ENCODE measurements at regions of chr2 and their contacts with region 1.

Region 1: DNA sequence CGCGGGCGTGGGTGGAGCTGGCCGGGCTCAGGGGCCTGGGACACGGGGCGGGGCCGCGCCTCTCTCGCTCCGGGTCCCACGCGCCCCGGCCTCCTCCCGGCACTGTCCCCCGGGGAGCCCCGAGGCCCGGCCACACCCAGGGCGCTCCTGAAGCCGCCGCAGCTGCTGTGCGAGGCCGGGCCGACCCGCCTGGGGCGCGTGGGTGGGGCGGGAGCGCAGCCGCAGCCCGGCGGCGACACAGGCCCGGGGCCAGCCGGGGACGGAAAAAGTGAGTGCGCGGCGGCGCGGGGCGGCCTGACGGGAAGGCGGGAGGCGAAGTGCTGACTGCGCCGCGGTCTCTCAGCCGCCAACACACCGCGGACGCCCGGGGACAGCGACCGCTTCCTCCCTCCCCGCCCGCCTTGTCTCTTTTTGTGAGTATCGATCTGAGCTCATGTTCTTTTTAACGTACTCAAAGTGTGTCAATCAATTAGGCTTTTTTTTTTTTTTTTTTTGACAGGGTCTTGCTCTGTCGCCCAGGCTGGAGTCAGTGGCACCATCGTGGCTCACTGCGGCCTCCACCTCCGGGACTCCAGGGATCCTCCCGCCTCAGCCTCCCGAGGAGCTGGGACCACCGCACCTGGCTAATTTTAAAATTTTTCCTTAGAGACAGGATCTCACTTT is 14.5 kb downstream of the PDCD1 start:
- DNase-seq: peak; percentile 79
- ATAC-seq: peak; percentile 90
- H3K4me3 ChIP-seq: peak overlapping the region; percentile 19 to 52 (median 39)
- H3K4me3 Mint-ChIP-seq: peak overlapping the region; percentile 84
- H3K27ac ChIP-seq: peak overlapping the region in 1 of 2 donors; percentile 30
- H3K27ac Mint-ChIP-seq: peak overlapping the region; percentile 73
- H3K4me1 ChIP-seq: peaks cover 18 to 26% of the 10 kb centered on the region in 2 donors
- H3K4me1 Mint-ChIP-seq: peaks cover 31% of the 10 kb centered on the region
- H3K27me3 ChIP-seq: no peaks in the 10 kb centered on the region
- H3K27me3 Mint-ChIP-seq: no peaks in the 10 kb centered on the region
- CTCF ChIP-seq: peak; percentile 32

Region 2: DNA sequence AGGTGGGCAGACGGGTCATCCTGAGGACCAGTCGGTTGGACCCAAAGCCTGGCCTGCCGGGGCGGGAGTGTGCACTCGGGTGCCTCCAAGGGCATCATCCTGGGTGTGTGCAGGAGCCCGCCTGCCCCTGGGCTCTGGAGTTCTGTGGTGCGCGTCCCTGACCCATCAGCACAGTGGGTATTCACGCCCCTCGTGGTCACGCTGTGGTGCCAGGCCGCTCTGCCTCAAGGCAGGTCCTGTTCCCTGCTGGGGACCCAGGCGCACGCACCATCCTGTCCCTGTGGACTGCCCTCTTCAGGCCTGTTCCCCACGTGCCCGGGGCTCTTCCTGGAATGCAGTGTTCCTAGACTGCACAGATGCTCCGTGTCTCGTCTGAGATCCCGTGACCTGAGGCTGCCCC is 124.1 kb before region 1 on chr2:
- CTCF ChIA-PET with region 1: no interaction called
- POLR2A ChIA-PET with region 1: interaction called, 10 read pairs
- intact Hi-C with region 1: no loop called
- DNase-seq: no peak
- ATAC-seq: no peak
- H3K4me3 ChIP-seq: no peak overlapping the region
- H3K4me3 Mint-ChIP-seq: no peak overlapping the region
- H3K27ac ChIP-seq: no peak overlapping the region
- H3K27ac Mint-ChIP-seq: no peak overlapping the region
- H3K4me1 ChIP-seq: no peaks in the 10 kb centered on the region
- H3K4me1 Mint-ChIP-seq: no peaks in the 10 kb centered on the region
- H3K27me3 ChIP-seq: no peaks in the 10 kb centered on the region
- H3K27me3 Mint-ChIP-seq: no peaks in the 10 kb centered on the region
- CTCF ChIP-seq: no peak

Region 3: GRCh38 chr2:241859436-241860183 is 15.4 kb after region 1 on chr2:
- CTCF ChIA-PET with region 1: no interaction called
- POLR2A ChIA-PET with region 1: interaction called, 8 read pairs
- intact Hi-C with region 1: loop called (anchors 1 kb)
- DNase-seq: peak; percentile 78
- ATAC-seq: peak; percentile 58
- H3K4me3 ChIP-seq: peak overlapping the region in 3 of 5 experiments; percentile 15 to 52 (median 21)
- H3K4me3 Mint-ChIP-seq: peak overlapping the region; percentile 81
- H3K27ac ChIP-seq: peak overlapping the region; percentile 35 to 44
- H3K27ac Mint-ChIP-seq: peak overlapping the region; percentile 88
- H3K4me1 ChIP-seq: peaks cover 34 to 50% of the 10 kb centered on the region in 2 donors
- H3K4me1 Mint-ChIP-seq: peaks cover 37% of the 10 kb centered on the region
- H3K27me3 ChIP-seq: peaks cover 0 to 38% (median 22%) of the 10 kb centered on the region in 4 experiments
- H3K27me3 Mint-ChIP-seq: peaks cover 21% of the 10 kb centered on the region
- CTCF ChIP-seq: no peak

Measured in B cell (primary cell).